ENCODE measurements at regions of chr22 and their contacts with region 1.

Region 1: DNA sequence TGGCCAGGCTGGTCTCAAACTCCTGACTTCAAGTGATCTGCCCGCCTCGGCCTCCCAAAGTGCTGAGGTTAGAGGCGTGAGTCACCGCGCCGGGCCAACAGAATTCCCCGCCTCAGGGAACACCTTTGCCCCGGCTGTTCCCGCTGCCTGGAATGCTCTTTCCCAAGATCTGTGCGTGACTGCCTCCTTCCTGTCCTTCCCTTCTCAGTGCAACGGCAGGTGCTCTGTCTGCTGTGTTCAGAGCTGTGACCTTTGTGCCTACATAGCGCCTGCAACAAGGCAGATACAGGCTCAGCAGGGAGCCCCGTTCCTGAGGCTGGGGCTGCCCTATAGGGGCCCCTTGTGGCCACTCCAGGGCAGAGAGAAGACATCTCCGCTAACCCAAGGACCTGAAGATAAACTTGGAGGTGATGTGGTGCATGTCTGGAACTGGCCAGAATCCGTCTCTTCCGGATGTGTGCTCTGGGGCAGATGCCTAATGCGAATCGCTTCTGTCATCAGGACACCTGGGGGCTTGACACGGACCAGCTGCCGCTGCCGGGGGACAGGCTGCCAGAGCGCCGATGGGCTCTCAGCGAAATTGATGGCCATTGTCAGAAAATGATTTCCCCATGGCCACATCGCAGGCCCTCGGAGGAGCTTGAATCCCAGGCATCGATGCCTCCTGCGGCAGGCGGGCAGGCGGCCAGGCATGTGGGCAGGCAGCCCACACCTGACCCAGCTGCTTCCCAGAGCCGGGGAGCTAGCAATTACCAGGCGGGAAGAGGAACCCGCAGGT is 43.5 kb upstream of the TCF20 start:
- DNase-seq: peak; percentile 86
- ATAC-seq: peak; percentile 83
- H3K4me3 Mint-ChIP-seq: no peak overlapping the region
- H3K27ac Mint-ChIP-seq: peak overlapping the region; percentile 84; the same call in 1 of the 2 replicates
- H3K4me1 Mint-ChIP-seq: peaks cover 39% of the 10 kb centered on the region
- H3K27me3 Mint-ChIP-seq: no peaks in the 10 kb centered on the region; the same call in 1 of the 2 replicates
- CTCF ChIP-seq: 0 out of 2 replicates have a peak, but pooled peaks have one; percentile 31

Region 2: GRCh38 chr22:42169055-42169469 is 144.9 kb before region 1 on chr22:
- CTCF ChIA-PET with region 1: interaction called, 26 read pairs
- POLR2A ChIA-PET with region 1: no interaction called
- DNase-seq: peak; percentile 90
- ATAC-seq: peak; percentile 92
- H3K4me3 Mint-ChIP-seq: no peak overlapping the region
- H3K27ac Mint-ChIP-seq: 0 out of 2 replicates have a peak overlapping the region, but pooled peaks have one; percentile 47
- H3K4me1 Mint-ChIP-seq: peaks cover 35% of the 10 kb centered on the region
- H3K27me3 Mint-ChIP-seq: no peaks in the 10 kb centered on the region
- CTCF ChIP-seq: peak; percentile 85

Region 3: GRCh38 chr22:42277988-42278776 is 35.8 kb before region 1 on chr22:
- CTCF ChIA-PET with region 1: interaction called, 11 read pairs
- POLR2A ChIA-PET with region 1: no interaction called
- DNase-seq: no peak
- ATAC-seq: no peak
- H3K4me3 Mint-ChIP-seq: no peak overlapping the region
- H3K27ac Mint-ChIP-seq: no peak overlapping the region
- H3K4me1 Mint-ChIP-seq: peaks cover 39% of the 10 kb centered on the region
- H3K27me3 Mint-ChIP-seq: peaks cover 40% of the 10 kb centered on the region
- CTCF ChIP-seq: no peak

Region 4: GRCh38 chr22:42294034-42294985 is 19.7 kb before region 1 on chr22:
- CTCF ChIA-PET with region 1: interaction called, 15 read pairs
- POLR2A ChIA-PET with region 1: no interaction called
- DNase-seq: peak; percentile 89
- ATAC-seq: peak; percentile 77
- H3K4me3 Mint-ChIP-seq: peak overlapping the region; percentile 47
- H3K27ac Mint-ChIP-seq: no peak overlapping the region
- H3K4me1 Mint-ChIP-seq: peaks cover 68% of the 10 kb centered on the region
- H3K27me3 Mint-ChIP-seq: 0 out of 2 replicates have a peak, but pooled peaks cover 2% of the 10 kb centered on the region
- CTCF ChIP-seq: no peak

Region 5: GRCh38 chr22:42300259-42301076 is 13.5 kb before region 1 on chr22:
- CTCF ChIA-PET with region 1: interaction called, 29 read pairs
- POLR2A ChIA-PET with region 1: no interaction called
- DNase-seq: no peak
- ATAC-seq: peak; percentile 49
- H3K4me3 Mint-ChIP-seq: peak overlapping the region; percentile 56
- H3K27ac Mint-ChIP-seq: peak overlapping the region; percentile 68; the same call in 1 of the 2 replicates
- H3K4me1 Mint-ChIP-seq: peaks cover 77% of the 10 kb centered on the region
- H3K27me3 Mint-ChIP-seq: peaks cover 23% of the 10 kb centered on the region
- CTCF ChIP-seq: no peak

Region 6: DNA sequence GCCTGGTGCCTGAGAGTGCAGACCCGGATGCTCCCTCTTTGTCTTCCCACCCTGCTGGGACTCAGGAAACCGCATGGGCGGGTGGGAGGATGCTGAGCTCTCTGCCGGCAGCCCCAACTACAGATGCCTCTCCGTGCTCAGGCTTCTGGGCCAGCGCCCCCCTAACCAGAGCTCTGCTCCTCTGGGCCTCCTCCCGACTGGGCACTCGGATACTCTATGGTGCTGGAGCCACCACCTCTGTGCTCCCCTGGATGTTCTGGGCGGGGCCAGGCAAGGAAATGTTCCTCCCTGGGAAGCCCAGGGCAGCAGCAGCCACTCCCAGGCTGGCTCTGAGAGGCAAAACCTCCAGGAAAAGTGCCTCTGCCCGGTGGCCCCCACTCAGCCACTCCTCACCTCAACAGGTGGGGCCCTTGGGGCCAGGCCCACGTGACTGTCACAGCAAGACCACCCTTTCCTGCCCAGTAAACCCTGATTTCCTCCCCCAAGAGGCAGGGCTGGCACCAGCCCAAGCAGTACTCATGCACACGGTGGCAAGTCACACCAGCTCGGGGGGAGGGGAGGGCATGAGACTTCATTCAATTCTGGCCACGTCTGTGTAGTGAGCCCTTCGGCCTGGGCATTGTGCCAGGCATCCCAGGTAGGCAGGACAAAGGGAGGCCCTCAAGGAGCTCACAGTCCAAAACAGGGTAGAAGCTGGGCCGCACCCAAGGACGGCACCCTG is 11.2 kb after region 1 on chr22:
- CTCF ChIA-PET with region 1: interaction called, 10 read pairs
- POLR2A ChIA-PET with region 1: interaction called, 5 read pairs
- DNase-seq: peak; percentile 36
- ATAC-seq: peak; percentile 73
- H3K4me3 Mint-ChIP-seq: no peak overlapping the region
- H3K27ac Mint-ChIP-seq: no peak overlapping the region
- H3K4me1 Mint-ChIP-seq: peaks cover 27% of the 10 kb centered on the region
- H3K27me3 Mint-ChIP-seq: no peaks in the 10 kb centered on the region; the same call in 1 of the 2 replicates
- CTCF ChIP-seq: no peak

Region 7: GRCh38 chr22:42369245-42370041 is 55.5 kb after region 1 on chr22:
- CTCF ChIA-PET with region 1: interaction called, 12 read pairs
- POLR2A ChIA-PET with region 1: no interaction called
- DNase-seq: peak; percentile 92
- ATAC-seq: peak; percentile 86
- H3K4me3 Mint-ChIP-seq: peak overlapping the region; percentile 86
- H3K27ac Mint-ChIP-seq: peak overlapping the region; percentile 95
- H3K4me1 Mint-ChIP-seq: peaks cover 58% of the 10 kb centered on the region
- H3K27me3 Mint-ChIP-seq: no peaks in the 10 kb centered on the region; the same call in 1 of the 2 replicates
- CTCF ChIP-seq: no peak

Measured in WTC11 (cell line).